PC-9 (cell line): ENCODE measurements at regions of chr1 and their contacts with region 1.

Region 1: GRCh38 chr1:246012341-246012740 is 494.7 kb downstream of the SMYD3 start:
- DNase-seq: no peak
- H3K4me3 ChIP-seq: no peak overlapping the region
- H3K27ac ChIP-seq: no peak overlapping the region
- H3K4me1 ChIP-seq: no peaks in the 10 kb centered on the region
- H3K27me3 ChIP-seq: no peaks in the 10 kb centered on the region
- CTCF ChIP-seq: peak; percentile 59

Region 2: GRCh38 chr1:246280551-246280950 is 268.2 kb after region 1 on chr1:
- CTCF ChIA-PET with region 1: no interaction called
- POLR2A ChIA-PET with region 1: no interaction called
- intact Hi-C with region 1: loop called (anchors 2 kb)
- DNase-seq: no peak
- H3K4me3 ChIP-seq: no peak overlapping the region
- H3K27ac ChIP-seq: no peak overlapping the region
- H3K4me1 ChIP-seq: no peaks in the 10 kb centered on the region
- H3K27me3 ChIP-seq: no peaks in the 10 kb centered on the region
- CTCF ChIP-seq: 0 out of 2 replicates have a peak, but pooled peaks have one; percentile 34

Region 3: DNA sequence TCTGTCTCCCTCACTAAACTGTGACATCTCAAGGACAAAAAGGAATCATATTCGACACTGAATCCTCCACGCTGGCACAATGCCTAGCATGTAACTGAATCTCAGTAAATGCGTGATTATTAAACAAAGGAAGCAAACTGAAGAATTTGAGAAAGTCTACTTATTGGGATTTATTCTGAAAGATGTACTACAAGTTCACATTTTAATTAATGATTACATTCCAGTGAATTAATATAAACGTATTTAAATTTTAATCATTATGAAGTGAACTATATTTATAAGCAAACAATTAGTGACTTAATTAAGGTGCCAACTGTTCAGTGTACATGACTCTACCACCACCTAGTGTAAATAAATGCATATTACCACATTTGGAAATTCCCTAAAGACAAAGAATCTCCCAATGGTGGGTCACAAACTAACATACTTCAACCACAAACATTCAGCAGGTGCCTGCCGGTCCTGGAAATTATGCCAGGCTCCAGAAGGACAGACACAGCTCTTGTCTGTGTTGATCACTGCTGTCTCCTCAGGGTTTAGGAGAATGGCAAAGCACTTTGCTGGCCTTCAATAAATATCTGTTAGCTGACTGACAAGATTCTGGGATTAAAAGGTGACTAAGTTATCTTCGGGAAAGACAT is 438.4 kb after region 1 on chr1:
- CTCF ChIA-PET with region 1: no interaction called
- POLR2A ChIA-PET with region 1: no interaction called
- intact Hi-C with region 1: loop called (anchors 2 kb)
- DNase-seq: no peak
- H3K4me3 ChIP-seq: no peak overlapping the region
- H3K27ac ChIP-seq: no peak overlapping the region
- H3K4me1 ChIP-seq: no peaks in the 10 kb centered on the region
- H3K27me3 ChIP-seq: no peaks in the 10 kb centered on the region
- CTCF ChIP-seq: peak; percentile 71

Region 4: DNA sequence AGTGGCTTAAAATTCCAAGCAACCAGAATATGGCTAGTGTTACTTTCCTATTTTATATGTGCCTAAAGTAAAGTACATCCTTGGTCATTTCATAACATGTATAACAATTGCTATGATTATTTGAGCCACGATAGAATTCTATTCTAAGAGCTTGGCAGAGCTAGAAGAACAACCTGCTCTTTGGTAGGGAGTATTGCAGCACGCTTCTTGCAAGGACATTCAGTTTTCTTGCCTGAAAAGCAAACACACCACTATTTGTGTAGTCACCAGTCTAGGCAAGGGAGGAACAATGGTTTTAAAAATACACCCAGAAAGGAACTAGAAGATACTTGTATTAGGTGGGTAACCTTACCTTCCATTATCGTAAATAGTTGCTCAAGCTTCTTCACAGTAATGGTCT is 605.4 kb after region 1 on chr1:
- CTCF ChIA-PET with region 1: no interaction called
- POLR2A ChIA-PET with region 1: no interaction called
- intact Hi-C with region 1: no loop called
- DNase-seq: no peak
- H3K4me3 ChIP-seq: no peak overlapping the region
- H3K27ac ChIP-seq: no peak overlapping the region
- H3K4me1 ChIP-seq: no peaks in the 10 kb centered on the region
- H3K27me3 ChIP-seq: no peaks in the 10 kb centered on the region
- CTCF ChIP-seq: no peak

Region 5: DNA sequence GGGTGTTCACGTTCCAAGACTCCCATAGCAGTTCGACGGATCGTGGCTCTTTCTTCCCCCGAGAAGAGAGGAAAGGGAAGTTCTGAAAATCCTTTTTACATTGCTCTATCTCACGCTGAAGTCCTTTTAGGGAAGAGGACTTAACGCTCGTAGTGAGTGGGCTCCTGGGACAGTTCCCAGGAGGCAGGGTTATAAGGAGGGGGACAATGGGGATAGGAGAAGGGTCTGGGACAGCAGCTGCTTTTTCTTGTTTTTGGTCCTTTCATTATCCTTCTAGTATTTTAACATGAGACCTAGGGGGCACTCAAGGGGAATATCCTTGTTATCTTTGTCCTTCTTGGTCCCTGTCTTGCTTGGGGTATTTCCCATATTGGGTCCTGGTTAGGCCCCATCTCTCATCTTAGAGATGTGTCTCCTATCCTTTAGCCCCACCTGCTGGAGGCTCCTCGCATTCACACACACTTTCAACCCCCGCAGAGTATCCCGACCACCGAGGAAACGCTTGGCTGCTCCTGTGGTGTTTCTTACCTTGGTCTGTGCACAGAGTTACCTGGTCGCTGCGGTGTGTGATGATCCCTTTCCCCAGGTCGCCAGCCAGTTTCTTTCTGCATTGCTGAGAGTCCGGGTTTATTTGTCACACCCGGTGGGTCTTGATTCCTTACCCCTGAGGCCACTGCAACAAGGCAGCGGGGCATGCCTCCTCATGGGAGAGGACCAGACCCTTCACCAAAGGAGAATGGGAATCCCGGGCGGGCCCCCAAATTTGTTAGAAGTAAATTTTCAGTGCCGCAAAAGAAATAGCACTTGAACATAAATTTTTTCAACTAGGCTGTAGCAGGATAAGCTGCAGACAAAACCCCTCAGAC is 741.6 kb after region 1 on chr1:
- CTCF ChIA-PET with region 1: no interaction called
- POLR2A ChIA-PET with region 1: no interaction called
- intact Hi-C with region 1: loop called (anchors 10 kb)
- DNase-seq: peak in 1 of 2 experiments; percentile 54
- H3K4me3 ChIP-seq: no peak overlapping the region
- H3K27ac ChIP-seq: no peak overlapping the region
- H3K4me1 ChIP-seq: no peaks in the 10 kb centered on the region
- H3K27me3 ChIP-seq: no peaks in the 10 kb centered on the region
- CTCF ChIP-seq: peak; percentile 82